PC-9 (cell line): ENCODE measurements at regions of chr19 and their contacts with region 1.

Region 1: DNA sequence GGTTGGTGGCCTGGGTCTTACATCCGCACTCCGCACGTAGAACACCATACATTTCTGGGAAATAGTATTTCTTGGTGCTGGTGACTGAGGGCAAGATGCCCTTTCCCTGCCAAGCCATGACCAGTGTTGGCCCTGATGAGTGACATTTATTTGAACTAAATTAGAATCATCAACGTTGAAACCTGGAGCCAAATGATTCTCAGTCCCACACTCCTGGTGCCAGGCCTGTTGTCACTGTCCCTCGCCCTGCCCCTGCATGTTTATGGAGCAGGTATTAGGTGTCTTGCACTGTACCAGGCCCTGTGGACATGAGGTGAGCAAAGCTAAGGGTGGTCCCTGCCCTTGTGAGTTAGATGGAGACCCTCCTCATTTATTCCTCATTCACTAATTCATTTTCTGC is 5.8 kb downstream of the CHST8 start:
- DNase-seq: no peak
- H3K4me3 ChIP-seq: no peak overlapping the region
- H3K27ac ChIP-seq: no peak overlapping the region
- H3K4me1 ChIP-seq: no peaks in the 10 kb centered on the region
- H3K27me3 ChIP-seq: peaks cover 90% of the 10 kb centered on the region
- CTCF ChIP-seq: no peak

Region 2: DNA sequence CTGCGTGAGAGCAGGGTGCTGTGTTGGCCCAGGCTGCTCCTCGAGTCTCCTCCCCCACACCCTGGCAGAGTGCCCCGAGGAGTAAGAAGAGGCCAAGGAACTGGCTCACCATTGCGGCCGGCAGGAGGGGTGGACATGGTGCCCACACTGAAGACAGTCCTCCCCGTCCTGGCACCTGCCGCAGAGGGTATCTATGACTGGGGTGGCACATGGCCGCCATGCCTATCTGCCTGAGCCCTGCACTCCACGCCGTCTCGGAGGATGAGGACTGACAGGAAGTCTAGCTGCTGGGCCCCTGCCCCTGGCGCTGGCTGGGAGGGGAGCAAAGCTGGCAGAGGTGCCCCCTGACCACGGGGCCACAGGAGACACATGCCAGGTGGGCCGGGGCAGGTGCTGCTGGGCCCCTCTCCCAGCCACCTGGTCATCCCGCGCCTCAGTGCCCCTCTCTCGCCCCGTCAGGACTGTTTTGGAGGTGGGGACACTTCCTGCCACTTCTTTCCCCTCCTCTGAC is 231.5 kb before region 1 on chr19:
- CTCF ChIA-PET with region 1: no interaction called
- POLR2A ChIA-PET with region 1: interaction called, 11 read pairs
- intact Hi-C with region 1: no loop called
- DNase-seq: no peak
- H3K4me3 ChIP-seq: no peak overlapping the region
- H3K27ac ChIP-seq: no peak overlapping the region
- H3K4me1 ChIP-seq: peaks cover 6% of the 10 kb centered on the region
- H3K27me3 ChIP-seq: no peaks in the 10 kb centered on the region
- CTCF ChIP-seq: no peak